Endothelial cell of umbilical vein (primary cell): ENCODE measurements at regions of chr12 and their contacts with region 1.

Region 1: DNA sequence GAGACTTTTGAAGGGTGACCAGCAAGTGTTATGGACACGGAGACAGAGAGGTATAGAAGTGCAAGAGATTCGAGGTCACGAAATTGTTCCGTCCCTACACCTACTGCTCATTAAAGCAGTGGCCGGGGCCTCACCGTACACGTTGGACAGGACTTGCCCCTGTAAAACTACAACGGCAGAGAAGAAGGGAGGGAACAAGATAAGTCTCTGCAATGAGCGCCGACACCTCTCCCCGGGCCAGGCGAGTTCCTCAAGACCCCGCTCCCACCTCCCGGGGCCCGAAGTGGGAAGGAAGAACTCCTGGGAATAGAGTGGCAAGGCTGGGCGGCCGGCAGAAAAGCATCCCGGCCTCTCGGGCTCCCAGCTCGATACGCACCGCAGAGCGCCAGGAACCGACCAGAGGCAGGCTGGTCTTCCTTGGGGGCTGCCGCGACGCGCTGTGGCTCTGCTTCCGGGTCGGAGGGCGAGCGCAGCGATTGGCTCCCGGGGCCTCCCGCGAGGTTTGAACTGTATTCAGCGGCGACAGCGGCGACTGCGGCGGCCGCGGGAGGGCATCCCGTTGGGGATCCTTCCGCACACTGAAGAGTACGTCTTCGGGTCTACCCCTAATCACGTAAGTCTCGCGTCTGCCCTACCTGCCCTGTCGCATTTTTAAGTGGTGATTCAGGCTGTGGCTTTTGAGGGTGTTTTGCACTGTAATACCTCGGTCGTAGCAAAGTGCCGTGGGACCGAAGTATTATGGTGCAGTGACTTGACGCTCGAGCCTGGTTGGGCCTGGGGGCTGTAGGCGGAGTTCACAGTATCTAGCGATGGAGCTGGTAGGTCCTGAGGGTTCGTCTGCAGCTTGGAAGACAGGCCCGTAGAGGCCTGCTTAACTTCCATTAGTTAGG is at the starts of genes NUP37 and PARPBP:
- DNase-seq: peak; percentile 93
- H3K4me3 ChIP-seq: peak within 1 kb of the TSS; percentile 67 to 96 (median 89)
- H3K27ac ChIP-seq: peak within 1 kb of the TSS; percentile 73
- H3K4me1 ChIP-seq: peaks cover 17% of the 10 kb centered on the region
- H3K27me3 ChIP-seq: no peaks in the 10 kb centered on the region
- CTCF ChIP-seq: no peak
- POLR2A ChIP-seq: peak; percentile 91
- total RNA-seq, gene NUP37: 41.3 and 46.8 TPM in 2 replicates
- total RNA-seq, gene PARPBP: 19.0 and 19.6 TPM in 2 replicates

Region 2: DNA sequence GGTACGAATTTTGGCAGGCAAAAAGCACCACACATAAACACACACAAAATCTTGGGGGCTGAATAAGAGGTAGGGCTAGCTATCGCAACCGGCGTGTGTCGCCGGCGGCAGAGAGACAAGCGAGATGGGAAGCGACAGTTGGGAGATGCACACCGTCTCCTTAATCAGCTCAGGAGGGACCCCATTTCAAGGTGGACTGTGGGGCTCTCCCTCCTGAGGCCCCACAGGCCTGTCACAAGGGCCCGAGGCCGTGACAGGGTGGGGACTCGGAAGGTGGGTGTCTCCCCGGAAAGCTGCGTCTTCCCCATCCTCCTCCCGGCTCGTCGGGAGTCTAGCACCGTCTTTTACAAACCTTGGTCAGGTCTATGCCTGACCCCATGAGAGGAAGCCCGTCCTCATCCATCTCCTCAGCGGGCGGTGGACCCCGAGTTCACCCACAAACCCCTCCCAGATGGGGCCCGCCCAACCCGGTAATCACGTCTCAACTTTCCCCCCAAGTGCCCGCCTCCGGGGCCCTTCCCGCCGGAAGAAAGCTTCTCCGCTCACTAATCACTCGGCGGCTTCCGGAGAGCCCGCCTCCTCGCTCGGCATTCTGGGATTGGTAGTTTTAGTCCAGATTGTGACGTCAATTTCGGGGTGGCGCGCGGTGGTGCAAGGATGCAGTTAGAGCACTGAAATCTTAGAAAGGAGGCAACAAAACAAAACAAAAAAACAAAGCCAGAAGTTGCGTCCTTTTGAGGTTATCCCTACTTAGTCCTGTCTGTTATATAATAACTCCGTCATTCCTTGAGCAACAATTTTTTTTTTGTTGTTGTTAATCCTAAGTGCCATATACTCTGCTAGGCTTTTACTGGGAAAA is 58.1 kb before region 1 on chr12 and contains the start of gene WASHC3:
- CTCF ChIA-PET with region 1: no interaction called
- POLR2A ChIA-PET with region 1: no interaction called
- dilution Hi-C with region 1: no loop called
- intact Hi-C with region 1: loop called (anchors 1 kb)
- DNase-seq: peak; percentile 93
- H3K4me3 ChIP-seq: peak within 1 kb of the TSS; percentile 66 to 94 (median 85)
- H3K27ac ChIP-seq: peak within 1 kb of the TSS; percentile 68
- H3K4me1 ChIP-seq: peaks cover 6% of the 10 kb centered on the region
- H3K27me3 ChIP-seq: no peaks in the 10 kb centered on the region
- CTCF ChIP-seq: no peak
- POLR2A ChIP-seq: peak; percentile 87
- total RNA-seq, gene WASHC3: 26.1 and 27.8 TPM in 2 replicates

Region 3: DNA sequence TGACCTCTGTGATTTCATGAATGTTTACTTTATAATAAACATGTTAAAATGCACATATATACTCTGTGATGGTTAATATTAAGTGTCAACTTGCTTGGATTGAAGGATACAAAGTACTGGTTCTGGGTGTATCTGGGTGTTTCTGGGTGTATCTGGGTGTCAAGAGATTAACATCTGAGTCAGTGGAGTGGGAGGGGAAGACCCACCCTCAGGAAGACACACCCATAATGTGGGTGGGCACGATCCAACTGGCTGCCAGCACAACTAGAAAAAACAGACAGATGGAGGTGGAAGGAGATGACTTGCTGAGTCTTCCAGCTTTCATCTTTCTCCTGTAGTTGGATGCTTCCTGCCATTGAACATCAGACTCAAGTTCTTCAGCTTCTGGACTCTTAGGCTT is 11.9 kb before region 1 on chr12:
- CTCF ChIA-PET with region 1: no interaction called
- POLR2A ChIA-PET with region 1: no interaction called
- dilution Hi-C with region 1: no loop called
- intact Hi-C with region 1: no loop called
- DNase-seq: no peak
- H3K4me3 ChIP-seq: no peak overlapping the region
- H3K27ac ChIP-seq: no peak overlapping the region
- H3K4me1 ChIP-seq: no peaks in the 10 kb centered on the region
- H3K27me3 ChIP-seq: no peaks in the 10 kb centered on the region
- CTCF ChIP-seq: no peak
- POLR2A ChIP-seq: no peak

Region 4: DNA sequence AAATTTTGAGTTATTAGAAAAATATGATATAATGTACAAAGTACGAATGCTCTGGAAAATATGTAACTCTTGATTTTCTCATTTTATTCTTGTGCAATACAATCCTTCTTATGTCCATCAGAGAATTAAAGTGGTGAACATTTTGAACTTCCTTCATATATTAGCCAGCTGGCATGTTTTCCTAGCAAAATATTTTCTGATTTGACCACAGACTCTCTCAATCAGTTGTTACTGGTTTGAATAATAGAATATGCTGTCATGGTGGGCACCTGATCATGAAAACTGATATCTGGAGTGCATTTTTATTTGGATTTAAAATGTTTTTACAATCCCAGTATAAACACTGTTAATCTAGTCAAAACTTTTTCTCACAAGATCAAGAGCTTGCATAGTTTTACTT is 24.3 kb after region 1 on chr12:
- CTCF ChIA-PET with region 1: no interaction called
- POLR2A ChIA-PET with region 1: no interaction called
- dilution Hi-C with region 1: no loop called
- intact Hi-C with region 1: loop called (anchors 2 kb)
- DNase-seq: no peak
- H3K4me3 ChIP-seq: no peak overlapping the region
- H3K27ac ChIP-seq: no peak overlapping the region
- H3K4me1 ChIP-seq: no peaks in the 10 kb centered on the region
- H3K27me3 ChIP-seq: no peaks in the 10 kb centered on the region
- CTCF ChIP-seq: no peak
- POLR2A ChIP-seq: no peak

Region 5: DNA sequence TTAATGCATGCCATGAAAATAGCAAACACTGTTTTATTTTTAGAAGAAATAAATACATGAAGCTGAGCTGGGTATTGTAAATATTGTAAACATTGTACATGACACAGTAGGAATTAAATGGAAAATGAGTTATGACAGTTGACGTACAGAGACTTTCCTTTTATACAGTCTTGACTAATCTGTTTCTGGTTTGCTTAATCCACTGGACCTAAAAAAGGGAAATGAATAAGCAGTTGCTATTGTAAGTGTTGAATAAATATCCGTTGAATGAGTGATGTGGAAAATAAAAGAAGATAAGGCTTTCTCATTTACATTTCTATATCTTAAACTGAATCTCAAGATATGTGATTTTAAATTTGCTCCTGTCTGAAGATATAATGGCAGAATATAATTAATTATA is 62.7 kb after region 1 on chr12:
- CTCF ChIA-PET with region 1: no interaction called
- POLR2A ChIA-PET with region 1: no interaction called
- dilution Hi-C with region 1: no loop called
- intact Hi-C with region 1: no loop called
- DNase-seq: peak; percentile 91
- H3K4me3 ChIP-seq: no peak overlapping the region
- H3K27ac ChIP-seq: peak overlapping the region; percentile 61
- H3K4me1 ChIP-seq: peaks cover 19% of the 10 kb centered on the region
- H3K27me3 ChIP-seq: no peaks in the 10 kb centered on the region
- CTCF ChIP-seq: no peak
- POLR2A ChIP-seq: peak; percentile 25

Region 6: GRCh38 chr12:102300824-102301461 is 181.0 kb after region 1 on chr12:
- CTCF ChIA-PET with region 1: no interaction called
- POLR2A ChIA-PET with region 1: no interaction called
- dilution Hi-C with region 1: no loop called
- intact Hi-C with region 1: loop called (anchors 5 kb)
- DNase-seq: peak; percentile 50
- H3K4me3 ChIP-seq: no peak overlapping the region
- H3K27ac ChIP-seq: no peak overlapping the region
- H3K4me1 ChIP-seq: no peaks in the 10 kb centered on the region
- H3K27me3 ChIP-seq: no peaks in the 10 kb centered on the region
- CTCF ChIP-seq: peak; percentile 24 to 38
- POLR2A ChIP-seq: no peak